H1 (cell line): ENCODE measurements at regions of chr2 and their contacts with region 1.

Region 1: DNA sequence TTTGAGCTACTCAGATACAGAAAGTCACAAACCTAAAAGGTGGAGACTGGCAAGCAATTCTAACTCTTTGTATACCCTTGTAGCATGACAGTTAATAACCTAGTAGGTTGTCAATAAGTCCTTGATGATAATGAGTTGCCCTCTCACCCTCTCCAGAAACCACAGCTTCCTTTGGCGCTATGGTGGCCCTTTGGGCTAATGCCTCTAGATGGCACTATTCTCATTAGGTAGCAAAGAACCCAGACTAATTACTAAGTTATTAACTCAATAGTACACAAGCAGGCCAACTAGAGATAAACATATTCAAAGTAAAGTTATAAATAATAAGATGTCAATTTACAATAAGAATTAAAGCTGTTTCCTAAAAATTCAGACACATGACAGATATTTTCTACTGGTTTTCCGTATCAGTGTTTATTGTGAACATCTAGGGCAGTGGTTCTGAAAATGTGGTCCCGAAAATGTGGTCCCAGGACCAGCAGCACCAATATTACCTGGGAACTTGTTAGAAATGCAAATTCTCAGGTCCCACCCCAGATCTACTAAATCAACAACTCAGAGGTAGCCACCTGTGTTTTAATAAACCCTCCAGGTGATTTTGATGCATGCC is 41.1 kb downstream of the LDAH start:
- DNase-seq: peak in 1 of 2 experiments; percentile 48
- H3K4me3 ChIP-seq: no peak overlapping the region
- H3K27ac ChIP-seq: no peak overlapping the region
- H3K4me1 ChIP-seq: no peaks in the 10 kb centered on the region
- H3K27me3 ChIP-seq: no peaks in the 10 kb centered on the region
- CTCF ChIP-seq: peak; percentile 25 to 73 (median 68)
- EP300 ChIP-seq: no peak
- POLR2A ChIP-seq: no peak
- RAD21 ChIP-seq: peak; percentile 75 to 81

Region 2: DNA sequence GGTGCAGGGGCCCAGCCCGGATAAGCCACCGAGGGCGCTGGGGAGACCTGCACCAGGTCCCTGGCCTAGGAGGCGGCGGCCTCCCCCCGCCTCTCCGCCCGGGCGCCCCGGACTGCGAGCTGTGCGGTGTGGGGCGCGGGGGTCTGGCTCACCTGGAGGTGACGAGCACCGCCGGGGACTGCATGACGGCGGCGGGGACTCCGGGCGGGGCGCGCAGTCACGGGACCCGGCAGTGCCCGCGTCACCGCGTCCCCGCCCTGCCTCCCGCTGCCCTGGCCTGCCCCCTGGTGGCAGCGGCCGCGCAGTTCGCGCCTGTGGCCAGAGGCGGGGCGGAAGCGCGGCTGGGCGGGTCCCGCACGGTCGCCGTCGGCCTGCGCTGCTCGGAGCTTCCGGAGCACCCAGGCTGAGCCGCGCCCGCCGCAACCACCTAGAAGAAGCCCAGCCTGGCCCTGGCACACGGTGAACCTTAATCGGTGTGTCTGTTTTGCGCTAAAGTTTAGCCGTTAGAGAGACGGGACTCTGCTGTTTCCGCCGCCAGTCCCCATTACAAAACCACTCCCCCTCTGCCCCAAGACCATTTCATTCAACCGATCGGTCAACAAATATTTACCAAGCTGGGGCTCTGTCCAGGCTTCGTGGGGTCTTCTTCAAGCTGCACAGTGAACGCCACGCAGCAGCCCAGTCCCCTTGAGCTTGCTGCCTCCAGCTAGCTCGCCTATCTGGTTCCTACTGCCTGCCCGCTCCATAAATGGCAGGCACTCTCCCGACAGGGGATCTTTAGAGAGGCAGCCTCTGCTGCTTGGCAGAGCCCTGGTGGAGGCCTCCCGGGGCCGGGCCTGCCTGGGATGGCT is 130.7 kb before region 1 on chr2 and contains the start of gene HS1BP3:
- CTCF ChIA-PET with region 1: interaction called, 10 read pairs
- POLR2A ChIA-PET with region 1: no interaction called
- DNase-seq: peak in 1 of 2 experiments; percentile 91
- H3K4me3 ChIP-seq: peak within 1 kb of the TSS; percentile 47 to 68 (median 56)
- H3K27ac ChIP-seq: no peak within 1 kb of the TSS
- H3K4me1 ChIP-seq: peaks cover 0 to 11% (median 7%) of the 10 kb centered on the region in 4 experiments; a peak in 5 of 7 replicates
- H3K27me3 ChIP-seq: peaks cover 0 to 4% (median under 1%) of the 10 kb centered on the region in 4 experiments; a peak in 4 of 7 replicates
- CTCF ChIP-seq: peak in 2 of 3 experiments; percentile 87 to 92; a peak in 3 of 4 replicates
- EP300 ChIP-seq: peak in 1 of 2 experiments; percentile 60; a peak in 1 of 3 replicates
- POLR2A ChIP-seq: peak in 1 of 2 experiments; percentile 74; a peak in 2 of 3 replicates
- RAD21 ChIP-seq: peak; percentile 49 to 76
- total RNA-seq, gene HS1BP3: 11.1 and 11.2 TPM in 2 replicates

Region 3: DNA sequence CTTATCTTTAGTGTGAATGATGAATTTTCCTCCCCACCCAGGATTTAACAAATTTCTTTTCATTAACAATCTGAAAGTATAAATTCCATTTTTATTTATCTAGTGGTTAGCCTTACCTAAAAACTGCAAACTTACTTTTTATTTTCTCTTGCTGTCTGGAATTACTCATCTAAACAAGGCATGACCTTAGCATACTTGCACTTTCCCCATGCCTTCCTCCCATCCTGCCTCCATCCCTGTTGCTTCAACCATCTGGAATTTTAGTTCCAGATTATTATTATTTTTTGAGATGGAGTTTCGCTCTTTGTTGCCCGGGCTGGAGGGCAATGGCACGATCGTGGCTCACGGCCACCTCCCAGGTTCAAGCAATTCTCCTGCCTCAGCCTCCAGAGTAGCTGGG is 79.2 kb before region 1 on chr2:
- CTCF ChIA-PET with region 1: no interaction called
- POLR2A ChIA-PET with region 1: no interaction called
- DNase-seq: no peak
- H3K4me3 ChIP-seq: no peak overlapping the region
- H3K27ac ChIP-seq: no peak overlapping the region
- H3K4me1 ChIP-seq: peaks cover 0 to 3% (median 0%) of the 10 kb centered on the region in 4 experiments; a peak in 2 of 7 replicates
- H3K27me3 ChIP-seq: no peaks in the 10 kb centered on the region
- CTCF ChIP-seq: no peak
- EP300 ChIP-seq: no peak
- POLR2A ChIP-seq: no peak
- RAD21 ChIP-seq: no peak

Region 4: GRCh38 chr2:20758997-20759396 is 22.8 kb before region 1 on chr2:
- CTCF ChIA-PET with region 1: interaction called, 16 read pairs
- POLR2A ChIA-PET with region 1: no interaction called
- DNase-seq: no peak
- H3K4me3 ChIP-seq: no peak overlapping the region
- H3K27ac ChIP-seq: no peak overlapping the region
- H3K4me1 ChIP-seq: peaks cover 0 to 2% (median 2%) of the 10 kb centered on the region in 4 experiments; a peak in 3 of 7 replicates
- H3K27me3 ChIP-seq: no peaks in the 10 kb centered on the region
- CTCF ChIP-seq: no peak
- EP300 ChIP-seq: no peak
- POLR2A ChIP-seq: no peak
- RAD21 ChIP-seq: no peak

Region 5: GRCh38 chr2:20796374-20796791 is 14.6 kb after region 1 on chr2:
- CTCF ChIA-PET with region 1: interaction called, 22 read pairs
- POLR2A ChIA-PET with region 1: no interaction called
- DNase-seq: no peak
- H3K4me3 ChIP-seq: no peak overlapping the region
- H3K27ac ChIP-seq: no peak overlapping the region
- H3K4me1 ChIP-seq: peaks cover 0 to 5% (median 1%) of the 10 kb centered on the region in 4 experiments; a peak in 4 of 7 replicates
- H3K27me3 ChIP-seq: no peaks in the 10 kb centered on the region
- CTCF ChIP-seq: no peak
- EP300 ChIP-seq: no peak
- POLR2A ChIP-seq: no peak
- RAD21 ChIP-seq: no peak

Region 6: GRCh38 chr2:20913491-20913890 is 131.7 kb after region 1 on chr2:
- CTCF ChIA-PET with region 1: interaction called, 11 read pairs
- POLR2A ChIA-PET with region 1: no interaction called
- DNase-seq: no peak
- H3K4me3 ChIP-seq: no peak overlapping the region
- H3K27ac ChIP-seq: no peak overlapping the region
- H3K4me1 ChIP-seq: peaks cover 0 to 2% (median 0%) of the 10 kb centered on the region in 4 experiments; a peak in 1 of 7 replicates
- H3K27me3 ChIP-seq: no peaks in the 10 kb centered on the region
- CTCF ChIP-seq: no peak
- EP300 ChIP-seq: no peak
- POLR2A ChIP-seq: no peak
- RAD21 ChIP-seq: no peak

Region 7: GRCh38 chr2:20962939-20963557 is 181.3 kb after region 1 on chr2:
- CTCF ChIA-PET with region 1: interaction called, 126 read pairs
- POLR2A ChIA-PET with region 1: interaction called, 3 read pairs
- DNase-seq: peak; percentile 27 to 90
- H3K4me3 ChIP-seq: no peak overlapping the region
- H3K27ac ChIP-seq: no peak overlapping the region
- H3K4me1 ChIP-seq: no peaks in the 10 kb centered on the region
- H3K27me3 ChIP-seq: no peaks in the 10 kb centered on the region
- CTCF ChIP-seq: peak; percentile 85 to 89 (median 85)
- EP300 ChIP-seq: no peak
- POLR2A ChIP-seq: no peak
- RAD21 ChIP-seq: peak; percentile 88